WTC11 (cell line): ENCODE measurements at regions of chr4 and their contacts with region 1.

Region 1: DNA sequence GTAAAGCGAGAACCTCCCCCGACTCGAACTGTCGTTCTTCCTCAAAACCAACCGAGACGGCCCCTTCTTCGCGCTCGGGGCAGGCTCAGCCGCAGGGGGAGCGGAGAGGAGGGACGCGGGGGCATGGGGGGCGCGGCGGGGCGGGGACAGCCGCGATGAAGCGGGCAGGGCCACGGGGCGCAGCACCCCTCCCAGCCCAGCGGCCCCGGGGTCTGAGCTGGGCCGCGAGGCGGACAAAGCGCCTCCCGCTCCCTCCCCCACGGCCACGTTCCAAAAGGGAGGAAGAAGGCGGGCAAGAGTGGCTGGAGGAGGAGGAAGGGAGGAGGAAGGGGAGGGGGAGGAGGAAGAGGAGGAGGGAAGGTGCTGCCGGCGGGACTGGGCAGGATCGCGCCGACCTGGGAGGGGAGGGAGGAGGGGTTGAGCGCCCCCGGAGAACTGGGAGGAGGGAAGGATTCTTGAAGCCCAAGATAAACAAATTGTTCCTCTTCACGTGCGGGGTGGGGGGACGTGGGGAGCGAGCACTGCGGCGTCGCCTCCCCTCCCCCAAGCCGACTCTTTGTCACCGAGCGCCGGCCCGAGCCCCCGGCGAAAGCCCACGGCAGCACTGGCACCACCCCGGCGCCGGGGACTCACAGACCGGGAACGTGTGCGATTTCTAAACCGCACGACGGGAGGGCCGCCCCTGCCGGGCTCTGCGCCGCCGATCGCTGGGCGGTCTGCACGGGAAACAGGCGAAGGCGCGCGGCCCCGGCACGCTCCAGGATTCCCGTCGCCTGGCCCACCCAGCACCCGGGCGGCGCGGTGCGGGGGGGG is 2.9 kb downstream of the MAML3 start:
- DNase-seq: peak; percentile 79
- ATAC-seq: peak; percentile 33
- H3K4me3 Mint-ChIP-seq: peak overlapping the region; percentile 98
- H3K27ac Mint-ChIP-seq: peak overlapping the region; percentile 92
- H3K4me1 Mint-ChIP-seq: peaks cover 38% of the 10 kb centered on the region
- H3K27me3 Mint-ChIP-seq: peaks cover 6% of the 10 kb centered on the region; the same call in 1 of the 2 replicates
- CTCF ChIP-seq: no peak

Region 2: DNA sequence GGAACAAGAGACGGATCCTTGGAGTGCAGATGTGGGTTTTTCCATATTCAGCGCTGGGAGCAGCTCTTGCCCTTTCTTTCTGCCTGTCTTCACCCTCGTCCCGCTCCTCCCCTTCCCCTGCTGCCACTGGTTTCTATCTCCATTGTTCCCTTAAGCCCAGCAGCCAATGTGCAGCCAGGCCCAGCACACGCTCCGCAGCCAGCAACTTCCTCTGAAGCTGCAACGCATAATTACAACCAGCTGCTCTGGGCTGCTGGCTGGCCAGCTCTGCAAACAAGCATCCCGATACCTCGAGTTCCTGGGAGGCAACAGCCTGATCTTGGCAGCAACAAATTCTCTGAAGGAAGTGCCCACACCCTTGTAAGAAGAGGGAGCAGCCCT is 86.5 kb after region 1 on chr4:
- CTCF ChIA-PET with region 1: interaction called, 5 read pairs
- POLR2A ChIA-PET with region 1: interaction called, 17 read pairs
- DNase-seq: peak; percentile 68
- ATAC-seq: peak; percentile 85
- H3K4me3 Mint-ChIP-seq: peak overlapping the region; percentile 63
- H3K27ac Mint-ChIP-seq: peak overlapping the region; percentile 100
- H3K4me1 Mint-ChIP-seq: peaks cover 68% of the 10 kb centered on the region
- H3K27me3 Mint-ChIP-seq: no peaks in the 10 kb centered on the region; the same call in 1 of the 2 replicates
- CTCF ChIP-seq: no peak